Activated CD8-positive, alpha-beta T cell treated with anti-CD3 and anti-CD28 coated beads, Interleukin-2, amount 10 ng/mL, durations not matched to agents 7 days and 5 days (primary cell): ENCODE measurements at regions of chr14 and their contacts with region 1.

Region 1: DNA sequence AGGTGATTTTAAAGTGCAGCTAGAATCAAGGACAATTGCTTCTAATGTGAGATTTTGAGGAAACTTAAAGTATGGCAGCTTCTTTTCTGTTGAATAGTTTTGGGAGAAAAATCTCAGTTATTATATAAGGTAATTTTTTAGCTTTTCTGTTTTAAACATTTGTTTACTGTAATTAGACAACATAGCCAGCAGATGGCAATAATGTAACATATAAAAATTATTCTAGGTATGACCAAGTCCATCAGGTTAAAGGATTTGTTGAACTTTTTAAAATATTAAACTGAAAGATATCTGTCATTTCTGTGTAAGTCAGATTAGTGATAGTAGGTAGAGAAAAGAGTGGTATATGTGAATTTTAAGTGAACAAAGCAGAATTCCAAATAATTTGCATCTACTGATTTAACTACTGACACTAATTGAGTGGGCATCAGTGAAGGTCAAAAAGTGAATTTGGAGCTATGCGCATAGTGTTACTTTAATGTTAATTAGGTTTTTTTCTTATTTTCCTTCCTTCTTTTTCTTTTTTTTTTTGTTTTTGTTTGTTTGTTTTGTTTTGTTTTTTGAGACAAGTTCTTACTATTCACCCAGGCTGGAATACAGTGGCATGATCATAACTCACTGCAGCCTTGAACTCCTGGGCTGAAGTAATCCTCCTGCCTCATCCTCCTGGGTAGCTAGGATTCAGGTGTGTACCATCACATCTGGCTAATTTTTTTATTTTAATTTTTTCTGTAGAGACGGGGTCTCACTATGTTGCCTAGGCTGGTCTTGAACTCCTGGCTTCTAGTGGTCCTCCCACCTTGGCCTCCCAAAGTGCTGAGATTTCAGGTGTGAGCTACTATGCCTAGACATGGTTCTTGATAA is 18.6 kb downstream of the PRORP start:
- DNase-seq: no peak
- ATAC-seq: no peak
- H3K4me3 Mint-ChIP-seq: no peak overlapping the region
- H3K27ac Mint-ChIP-seq: no peak overlapping the region
- H3K4me1 Mint-ChIP-seq: peaks cover 4% of the 10 kb centered on the region
- H3K27me3 Mint-ChIP-seq: no peaks in the 10 kb centered on the region

Region 2: DNA sequence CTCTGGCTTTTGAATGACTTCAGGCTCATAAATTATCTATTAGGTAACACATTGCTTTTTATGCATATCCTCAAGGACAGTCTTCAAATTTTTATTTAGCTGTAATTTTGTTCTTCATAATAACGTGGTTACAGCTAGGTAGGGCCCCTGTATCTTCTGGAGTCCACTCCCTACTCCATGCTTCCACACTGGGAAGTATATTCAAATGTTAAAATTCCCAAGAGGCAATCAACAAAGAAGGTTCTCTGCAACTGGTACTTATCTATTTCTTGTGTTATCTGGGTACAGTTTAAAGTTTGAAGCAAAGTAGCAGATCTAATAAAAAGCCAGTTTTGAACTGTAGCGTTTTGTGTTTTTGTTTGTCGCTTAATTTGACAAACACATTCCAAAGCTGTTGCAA is 245.7 kb before region 1 on chr14:
- CTCF ChIA-PET with region 1: no interaction called
- POLR2A ChIA-PET with region 1: no interaction called
- DNase-seq: no peak
- ATAC-seq: no peak
- H3K4me3 Mint-ChIP-seq: no peak overlapping the region
- H3K27ac Mint-ChIP-seq: no peak overlapping the region
- H3K4me1 Mint-ChIP-seq: peaks cover 7% of the 10 kb centered on the region
- H3K27me3 Mint-ChIP-seq: no peaks in the 10 kb centered on the region

Region 3: GRCh38 chr14:35121887-35122695 is 18.9 kb before region 1 on chr14 and contains the starts of genes PPP2R3C and PRORP:
- CTCF ChIA-PET with region 1: interaction called, 15 read pairs
- POLR2A ChIA-PET with region 1: no interaction called
- DNase-seq: peak; percentile 96
- ATAC-seq: peak; percentile 90
- H3K4me3 Mint-ChIP-seq: peak within 1 kb of the TSS; percentile 98
- H3K27ac Mint-ChIP-seq: peak within 1 kb of the TSS; percentile 99
- H3K4me1 Mint-ChIP-seq: peaks cover 55% of the 10 kb centered on the region
- H3K27me3 Mint-ChIP-seq: no peaks in the 10 kb centered on the region
- total RNA-seq, gene PPP2R3C: 33.3 to 38.6 TPM
- total RNA-seq, gene PRORP: 32.5 to 35.4 TPM

Region 4: GRCh38 chr14:35215110-35215876 is 74.3 kb after region 1 on chr14:
- CTCF ChIA-PET with region 1: interaction called, 17 read pairs
- POLR2A ChIA-PET with region 1: no interaction called
- DNase-seq: no peak
- ATAC-seq: no peak
- H3K4me3 Mint-ChIP-seq: no peak overlapping the region
- H3K27ac Mint-ChIP-seq: no peak overlapping the region
- H3K4me1 Mint-ChIP-seq: peaks cover 16% of the 10 kb centered on the region
- H3K27me3 Mint-ChIP-seq: no peaks in the 10 kb centered on the region

Region 5: GRCh38 chr14:35285168-35286002 is 144.4 kb after region 1 on chr14:
- CTCF ChIA-PET with region 1: interaction called, 12 read pairs
- POLR2A ChIA-PET with region 1: no interaction called
- DNase-seq: peak; percentile 42
- ATAC-seq: peak; percentile 80
- H3K4me3 Mint-ChIP-seq: peak overlapping the region; percentile 68
- H3K27ac Mint-ChIP-seq: peak overlapping the region; percentile 85
- H3K4me1 Mint-ChIP-seq: peaks cover 48% of the 10 kb centered on the region
- H3K27me3 Mint-ChIP-seq: no peaks in the 10 kb centered on the region

Region 6: DNA sequence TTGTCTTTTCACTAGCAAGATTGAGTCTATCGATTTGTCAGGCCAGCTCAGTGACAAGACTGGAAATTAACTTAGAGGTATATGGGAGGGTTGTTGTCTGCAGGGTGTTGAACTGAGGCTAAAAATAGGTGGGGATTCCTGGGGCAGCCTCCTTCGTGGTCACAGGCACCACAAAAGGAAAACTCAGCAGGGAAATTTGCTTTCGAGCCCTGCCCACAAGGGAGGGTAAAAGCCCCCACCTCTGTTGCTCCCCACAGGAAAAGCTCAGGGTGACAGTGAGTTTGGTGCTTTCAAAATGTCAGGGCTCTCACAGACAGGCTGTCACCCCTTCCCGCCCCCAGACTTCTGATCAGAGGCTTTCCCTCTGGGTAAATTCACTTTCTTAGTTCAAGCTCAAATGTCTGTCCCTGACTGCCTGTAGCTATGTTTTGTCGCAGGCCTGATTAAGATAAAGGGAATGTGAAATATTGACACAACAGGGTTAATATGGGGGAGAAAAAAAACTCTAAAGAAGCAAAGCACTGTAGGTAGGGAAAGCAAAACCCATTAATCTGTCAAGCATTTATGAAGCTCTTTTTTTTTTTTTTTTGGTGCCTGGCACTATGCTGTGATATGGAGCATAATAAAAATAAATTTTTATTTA is 275.3 kb after region 1 on chr14:
- CTCF ChIA-PET with region 1: interaction called, 123 read pairs
- POLR2A ChIA-PET with region 1: interaction called, 9 read pairs
- DNase-seq: peak; percentile 62
- ATAC-seq: peak; percentile 50
- H3K4me3 Mint-ChIP-seq: peak overlapping the region; percentile 29
- H3K27ac Mint-ChIP-seq: peak overlapping the region; percentile 79
- H3K4me1 Mint-ChIP-seq: peaks cover 51% of the 10 kb centered on the region
- H3K27me3 Mint-ChIP-seq: no peaks in the 10 kb centered on the region